ENCODE measurements at regions of chr11 and their contacts with region 1.

Region 1: DNA sequence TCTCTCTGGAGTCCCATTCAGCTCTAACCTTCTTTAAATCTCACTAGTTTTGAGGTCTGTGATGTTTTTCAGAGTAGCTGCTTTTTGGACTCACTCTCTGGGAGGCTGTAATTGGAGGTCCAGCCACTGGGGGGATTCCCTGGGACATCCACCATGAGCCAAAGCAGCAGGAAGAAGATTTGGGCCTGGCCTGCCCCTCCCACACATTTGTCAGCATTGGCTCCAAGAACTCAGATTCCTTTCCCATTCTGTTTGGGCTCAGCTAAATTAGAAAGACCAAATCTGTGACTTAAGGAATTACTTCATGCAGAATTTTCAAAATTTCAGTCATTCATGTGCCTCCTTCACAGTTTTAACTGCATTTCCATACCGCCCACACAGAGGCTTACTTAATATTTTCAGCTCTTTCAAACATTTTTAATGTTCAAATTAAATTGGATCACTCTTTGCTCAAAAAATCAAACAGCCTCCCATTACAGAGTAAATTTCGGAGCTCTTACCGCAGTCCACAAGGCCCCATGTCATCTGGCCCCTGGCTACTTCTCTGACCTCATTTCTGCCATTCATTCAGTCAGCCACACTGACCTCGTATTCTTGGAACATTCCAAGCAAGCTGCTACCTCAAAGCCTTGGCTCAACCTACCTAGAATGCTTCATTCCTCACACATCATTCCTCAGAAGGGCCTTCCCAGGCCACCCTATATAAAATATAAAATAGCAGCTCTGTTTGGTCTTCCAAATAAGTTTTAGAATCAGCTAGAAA is 54.5 kb upstream of the RRAS2 start:
- H3K4me3 ChIP-seq: no peak overlapping the region
- H3K27ac ChIP-seq: no peak overlapping the region
- H3K4me1 ChIP-seq: no peaks in the 10 kb centered on the region
- CTCF ChIP-seq: no peak

Region 2: DNA sequence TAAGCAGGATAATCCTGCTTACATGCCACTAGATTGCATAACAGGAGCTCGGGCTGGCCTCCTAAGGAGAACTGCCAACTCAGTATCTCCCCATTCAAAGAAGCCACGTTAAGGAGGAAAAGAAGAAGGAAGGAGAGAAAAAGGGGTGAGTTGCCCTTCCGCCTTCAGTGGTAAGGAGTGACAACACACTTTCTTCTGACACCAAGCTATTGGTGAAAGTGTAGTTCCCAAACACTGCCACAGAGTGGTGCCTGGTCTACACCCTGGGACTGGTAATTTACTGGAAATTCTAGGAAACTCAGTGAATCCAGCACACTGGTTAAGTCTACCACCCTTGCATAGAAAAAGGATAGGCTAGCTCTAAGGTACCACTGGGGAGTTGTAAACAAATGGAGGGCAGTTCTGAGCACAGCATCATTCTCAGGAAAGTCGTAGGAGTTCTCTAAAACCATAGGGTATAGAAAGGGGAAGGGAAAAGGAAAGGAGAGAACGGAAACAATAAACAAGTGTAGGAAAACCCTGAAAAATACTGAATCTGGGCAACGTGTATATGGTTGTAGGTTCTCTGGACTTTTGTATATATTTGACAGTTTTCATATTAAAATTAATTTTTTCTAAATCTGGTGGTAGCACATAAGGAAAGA is 112.7 kb before region 1 on chr11:
- CTCF ChIA-PET with region 1: interaction called, 99 read pairs
- POLR2A ChIA-PET with region 1: interaction called, 4 read pairs
- H3K4me3 ChIP-seq: no peak overlapping the region
- H3K27ac ChIP-seq: no peak overlapping the region
- H3K4me1 ChIP-seq: no peaks in the 10 kb centered on the region
- CTCF ChIP-seq: peak; percentile 49; the same call in 1 of the 2 replicates

Region 3: DNA sequence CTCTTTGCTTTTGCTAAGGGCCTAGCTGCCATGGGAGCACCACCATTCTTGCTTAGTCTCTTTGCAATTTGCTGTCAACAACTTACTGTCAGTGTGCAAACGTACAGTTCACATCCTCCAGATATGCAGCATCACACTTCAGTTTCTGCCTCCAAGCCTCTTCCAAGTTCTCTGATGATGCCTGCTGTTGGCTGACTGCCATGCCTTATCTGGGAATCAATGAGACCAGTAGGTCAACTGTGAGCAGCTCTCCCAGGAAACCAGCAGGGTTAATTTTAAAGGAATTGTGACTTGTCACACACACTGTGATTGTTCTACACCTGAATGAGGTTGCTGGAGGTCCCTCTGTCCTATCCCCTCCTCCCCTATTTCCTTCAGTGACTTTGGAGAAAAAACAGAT is 30.1 kb after region 1 on chr11:
- CTCF ChIA-PET with region 1: interaction called, 13 read pairs
- POLR2A ChIA-PET with region 1: no interaction called
- H3K4me3 ChIP-seq: no peak overlapping the region
- H3K27ac ChIP-seq: no peak overlapping the region
- H3K4me1 ChIP-seq: no peaks in the 10 kb centered on the region
- CTCF ChIP-seq: no peak

Region 4: DNA sequence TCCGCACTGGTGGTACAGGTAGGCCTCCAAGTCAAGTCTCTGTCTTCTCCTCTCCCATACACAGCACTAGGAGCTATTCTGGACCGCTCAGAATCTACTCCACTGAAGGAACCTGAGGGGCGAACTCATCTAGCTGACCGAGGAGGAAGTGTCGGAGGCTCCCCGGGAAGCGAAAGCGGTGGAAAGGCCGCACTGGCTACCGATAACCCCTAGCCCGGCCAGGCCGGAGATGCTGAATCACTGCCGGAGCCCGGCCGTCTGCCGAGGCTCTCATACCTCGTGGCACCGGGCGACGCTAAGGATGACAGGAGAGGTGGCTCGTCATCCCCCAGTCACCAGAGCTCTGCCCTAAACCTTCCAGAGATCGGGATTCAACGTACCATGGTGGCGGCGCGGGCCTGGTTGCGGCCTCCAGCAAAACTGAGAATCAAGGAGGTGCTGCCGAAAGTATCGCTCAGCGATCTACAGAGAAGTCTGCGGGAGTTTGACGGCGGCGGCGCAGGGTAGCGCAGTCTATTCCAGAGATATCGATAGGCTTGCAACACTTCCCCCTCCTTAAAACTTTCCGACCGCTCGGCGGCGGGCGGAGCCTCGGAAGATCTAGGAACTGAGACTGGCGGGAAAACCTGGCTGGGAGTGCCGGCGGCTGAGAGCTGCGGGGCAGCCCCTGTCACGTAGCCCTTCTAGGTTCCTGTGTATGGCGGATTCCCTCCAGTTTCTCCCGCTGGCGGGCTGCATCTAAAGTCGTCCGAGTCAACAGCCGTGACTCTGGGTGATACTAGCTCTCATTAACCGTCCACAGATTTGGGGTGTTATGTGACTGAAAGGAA is 106.6 kb after region 1 on chr11 and contains the start of gene PSMA1:
- CTCF ChIA-PET with region 1: no interaction called
- POLR2A ChIA-PET with region 1: no interaction called
- H3K4me3 ChIP-seq: peak within 1 kb of the TSS; percentile 81
- H3K27ac ChIP-seq: peak within 1 kb of the TSS; percentile 77
- H3K4me1 ChIP-seq: no peaks in the 10 kb centered on the region
- CTCF ChIP-seq: no peak

Measured in HEK293 (cell line).